Left colon (tissue), 2 donors: ENCODE measurements at regions of chr5 and their contacts with region 1.

Region 1: DNA sequence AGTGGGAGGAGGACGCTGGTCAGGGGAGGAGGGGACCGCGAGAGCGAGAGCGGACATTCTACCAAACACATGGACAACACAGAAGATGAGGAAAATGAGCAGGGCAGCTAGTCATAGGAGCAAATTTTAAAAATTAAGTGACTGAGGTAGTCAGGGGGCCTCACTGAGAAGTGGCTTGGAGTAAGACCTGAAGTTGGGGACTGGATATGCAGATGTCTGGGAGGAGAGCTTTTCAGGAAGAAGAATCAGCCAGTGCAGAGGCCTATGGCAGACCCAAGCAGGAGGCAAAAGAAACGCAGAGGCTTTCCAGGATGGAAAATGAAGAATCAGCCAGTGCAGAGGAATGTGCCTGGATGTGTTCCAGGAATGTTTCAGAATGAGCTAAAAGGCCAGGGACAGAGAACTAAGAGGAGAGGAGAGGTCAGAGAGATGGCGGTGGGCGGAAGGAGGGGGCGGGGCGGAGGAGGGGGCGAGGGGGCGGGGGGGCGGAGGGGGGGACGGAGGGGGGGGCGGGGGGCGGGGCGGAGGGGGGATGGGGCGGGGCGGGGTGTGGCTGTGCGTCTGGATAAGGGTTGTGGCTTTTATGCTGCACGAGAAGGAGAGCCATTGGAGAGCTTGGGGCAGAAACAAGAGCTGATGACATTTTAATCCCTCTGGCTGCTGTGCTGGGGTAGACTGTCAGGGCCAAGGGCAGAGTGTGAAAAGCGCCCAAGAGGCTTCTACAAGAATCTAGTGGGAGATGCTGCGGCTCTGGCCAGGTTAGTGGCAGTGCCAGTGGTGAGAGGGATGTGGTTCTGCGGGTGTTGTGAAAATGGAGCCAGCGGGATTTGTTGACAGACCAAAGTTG is 129.6 kb downstream of the KCNIP1 start:
- DNase-seq: peak; percentile 11 to 31
- ATAC-seq: peak; percentile 43

Region 2: GRCh38 chr5:170434966-170435605 is 198.4 kb before region 1 on chr5:
- intact Hi-C with region 1: loop called in 1 of 2 experiments (anchors 5 kb)
- DNase-seq: peak in 1 of 2 donors; percentile 59
- ATAC-seq: peak; percentile 56